MCF 10A (cell line): ENCODE measurements at regions of chr3 and their contacts with region 1.

Region 1: GRCh38 chr3:172511783-172512762 is 11.2 kb downstream of the TNFSF10 start:
- DNase-seq: no peak
- H3K4me3 Mint-ChIP-seq: no peak overlapping the region
- H3K27ac Mint-ChIP-seq: no peak overlapping the region
- H3K4me1 Mint-ChIP-seq: peaks cover 10% of the 10 kb centered on the region
- H3K27me3 Mint-ChIP-seq: no peaks in the 10 kb centered on the region
- CTCF ChIP-seq: no peak

Region 2: DNA sequence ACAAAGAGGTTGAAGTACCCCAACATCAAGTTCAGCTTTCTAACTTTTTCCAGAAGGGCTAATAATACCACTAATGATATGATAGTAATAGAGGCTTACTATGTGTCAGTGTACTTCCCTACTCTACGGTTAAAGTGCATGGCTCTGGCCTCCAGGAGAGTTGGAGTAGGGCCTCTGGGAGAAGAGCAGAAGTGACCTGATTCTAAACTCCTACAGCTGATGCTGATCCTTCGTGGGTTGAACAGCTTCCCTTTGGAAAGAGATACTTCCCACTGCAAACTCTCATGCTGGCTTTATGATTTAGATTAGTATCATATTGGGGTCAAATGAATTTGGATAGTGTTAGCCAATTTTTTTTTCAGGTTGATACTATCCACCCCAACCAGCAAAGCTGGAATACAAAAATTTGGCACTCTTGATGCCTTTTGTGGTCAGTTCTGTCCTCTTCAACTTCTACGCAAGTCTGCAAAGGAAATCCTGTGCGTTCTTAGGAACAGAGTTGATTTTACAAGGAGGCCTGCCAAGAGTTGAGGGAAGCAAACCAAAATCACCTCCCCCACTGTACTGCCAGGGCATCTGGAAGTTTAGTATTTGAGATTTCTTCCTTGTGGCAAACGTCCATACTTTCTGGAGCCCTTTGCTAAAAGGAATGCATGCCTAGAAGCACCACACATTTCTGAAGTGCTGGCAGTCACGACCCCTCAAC is 651.1 kb before region 1 on chr3:
- CTCF ChIA-PET with region 1: no interaction called
- POLR2A ChIA-PET with region 1: no interaction called
- intact Hi-C with region 1: no loop called
- DNase-seq: no peak
- H3K4me3 Mint-ChIP-seq: no peak overlapping the region
- H3K27ac Mint-ChIP-seq: no peak overlapping the region
- H3K4me1 Mint-ChIP-seq: no peaks in the 10 kb centered on the region
- H3K27me3 Mint-ChIP-seq: no peaks in the 10 kb centered on the region
- CTCF ChIP-seq: no peak

Region 3: DNA sequence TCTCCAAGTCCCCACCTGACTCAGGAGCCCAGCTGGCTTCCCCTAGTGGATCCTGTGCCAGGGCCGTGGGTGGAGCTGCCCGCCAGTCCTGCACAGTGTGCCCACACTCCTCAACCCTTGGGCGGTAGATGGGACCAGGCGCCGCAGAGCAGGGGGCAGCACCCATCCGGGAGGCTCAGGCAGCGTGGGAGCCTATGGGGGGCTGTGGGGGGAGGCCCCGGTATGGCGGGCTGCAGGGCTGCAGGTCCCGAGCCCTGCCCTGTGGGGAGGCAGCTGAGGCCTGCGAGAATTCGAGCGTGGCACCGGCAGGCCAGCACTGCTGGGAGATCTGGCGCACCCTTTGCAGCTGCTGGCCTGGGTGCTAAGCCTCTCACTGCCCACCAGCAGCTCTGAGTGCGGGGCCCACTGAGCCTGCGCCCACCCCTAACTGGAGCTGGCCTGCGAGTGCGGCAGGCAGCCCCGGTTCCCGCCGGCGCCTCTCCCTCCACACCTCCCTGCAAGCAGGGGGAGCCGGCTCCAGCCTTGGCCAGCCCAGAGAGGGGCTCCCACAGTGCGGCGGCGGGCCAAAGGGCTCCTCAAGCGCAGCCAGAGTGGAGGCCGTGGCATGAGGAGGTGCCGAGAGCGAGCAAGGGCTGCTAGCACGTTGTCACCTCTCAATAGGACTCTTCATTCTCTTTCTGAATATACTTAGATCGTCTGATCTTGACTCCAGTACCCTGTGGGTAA is 605.0 kb before region 1 on chr3:
- CTCF ChIA-PET with region 1: no interaction called
- POLR2A ChIA-PET with region 1: no interaction called
- intact Hi-C with region 1: no loop called
- DNase-seq: no peak
- H3K4me3 Mint-ChIP-seq: no peak overlapping the region
- H3K27ac Mint-ChIP-seq: no peak overlapping the region
- H3K4me1 Mint-ChIP-seq: peaks cover under 1% of the 10 kb centered on the region
- H3K27me3 Mint-ChIP-seq: no peaks in the 10 kb centered on the region
- CTCF ChIP-seq: no peak

Region 4: GRCh38 chr3:172542089-172542488 is 30.0 kb after region 1 on chr3:
- CTCF ChIA-PET with region 1: interaction called, 11 read pairs
- POLR2A ChIA-PET with region 1: interaction called, 20 read pairs
- intact Hi-C with region 1: no loop called
- DNase-seq: no peak
- H3K4me3 Mint-ChIP-seq: no peak overlapping the region
- H3K27ac Mint-ChIP-seq: no peak overlapping the region
- H3K4me1 Mint-ChIP-seq: peaks cover 17% of the 10 kb centered on the region
- H3K27me3 Mint-ChIP-seq: no peaks in the 10 kb centered on the region
- CTCF ChIP-seq: no peak

Region 5: GRCh38 chr3:172550347-172550943 is 38.4 kb after region 1 on chr3:
- CTCF ChIA-PET with region 1: interaction called, 3 read pairs
- POLR2A ChIA-PET with region 1: interaction called, 20 read pairs
- intact Hi-C with region 1: no loop called
- DNase-seq: peak; percentile 95
- H3K4me3 Mint-ChIP-seq: no peak overlapping the region
- H3K27ac Mint-ChIP-seq: peak overlapping the region; percentile 27
- H3K4me1 Mint-ChIP-seq: peaks cover 15% of the 10 kb centered on the region
- H3K27me3 Mint-ChIP-seq: no peaks in the 10 kb centered on the region
- CTCF ChIP-seq: no peak

Region 6: GRCh38 chr3:172557221-172558220 is 45.4 kb after region 1 on chr3:
- CTCF ChIA-PET with region 1: no interaction called
- POLR2A ChIA-PET with region 1: interaction called, 16 read pairs
- intact Hi-C with region 1: no loop called
- DNase-seq: peak; percentile 76
- H3K4me3 Mint-ChIP-seq: no peak overlapping the region
- H3K27ac Mint-ChIP-seq: no peak overlapping the region
- H3K4me1 Mint-ChIP-seq: peaks cover 21% of the 10 kb centered on the region
- H3K27me3 Mint-ChIP-seq: no peaks in the 10 kb centered on the region
- CTCF ChIP-seq: no peak

Region 7: GRCh38 chr3:172609750-172610149 is 97.7 kb after region 1 on chr3:
- CTCF ChIA-PET with region 1: no interaction called
- POLR2A ChIA-PET with region 1: no interaction called
- intact Hi-C with region 1: no loop called
- DNase-seq: no peak
- H3K4me3 Mint-ChIP-seq: no peak overlapping the region
- H3K27ac Mint-ChIP-seq: no peak overlapping the region
- H3K4me1 Mint-ChIP-seq: peaks cover 18% of the 10 kb centered on the region
- H3K27me3 Mint-ChIP-seq: no peaks in the 10 kb centered on the region
- CTCF ChIP-seq: no peak

Region 8: GRCh38 chr3:172766241-172766640 is 254.2 kb after region 1 on chr3:
- CTCF ChIA-PET with region 1: no interaction called
- POLR2A ChIA-PET with region 1: no interaction called
- intact Hi-C with region 1: no loop called
- DNase-seq: no peak
- H3K4me3 Mint-ChIP-seq: no peak overlapping the region
- H3K27ac Mint-ChIP-seq: peak overlapping the region; percentile 16
- H3K4me1 Mint-ChIP-seq: peaks cover 16% of the 10 kb centered on the region
- H3K27me3 Mint-ChIP-seq: no peaks in the 10 kb centered on the region
- CTCF ChIP-seq: no peak